ENCODE measurements at regions of chr1 and their contacts with region 1.

Region 1: GRCh38 chr1:75785983-75786853 is at the start of gene RABGGTB:
- DNase-seq: peak; percentile 92 to 96
- H3K4me3 ChIP-seq: peak within 1 kb of the TSS; percentile 59 to 62
- H3K27ac ChIP-seq: peak within 1 kb of the TSS; percentile 52 to 84
- H3K4me1 ChIP-seq: peaks cover 0 to 51% (median 38%) of the 10 kb centered on the region in 4 donors
- H3K27me3 ChIP-seq: no peaks in the 10 kb centered on the region
- CTCF ChIP-seq: no peak

Region 2: GRCh38 chr1:75724472-75725022 is 61.7 kb before region 1 on chr1 and contains the start of gene ACADM:
- intact Hi-C with region 1: loop called (anchors 2 kb)
- DNase-seq: peak; percentile 86 to 93
- H3K4me3 ChIP-seq: peak within 1 kb of the TSS; percentile 80 to 89
- H3K27ac ChIP-seq: peak within 1 kb of the TSS; percentile 81 to 93
- H3K4me1 ChIP-seq: peaks cover 0 to 31% (median 2%) of the 10 kb centered on the region in 4 donors
- H3K27me3 ChIP-seq: no peaks in the 10 kb centered on the region
- CTCF ChIP-seq: no peak

Region 3: GRCh38 chr1:76919085-76919484 is 1132.9 kb after region 1 on chr1:
- intact Hi-C with region 1: no loop called
- DNase-seq: no peak
- H3K4me3 ChIP-seq: no peak overlapping the region
- H3K27ac ChIP-seq: no peak overlapping the region
- H3K4me1 ChIP-seq: no peaks in the 10 kb centered on the region
- H3K27me3 ChIP-seq: no peaks in the 10 kb centered on the region
- CTCF ChIP-seq: no peak